Activated CD4-positive, alpha-beta T cell treated with anti-CD3 and anti-CD28 coated beads, Interleukin-2, amount 10 ng/mL, durations not matched to agents 24 days and 14 days (primary cell): ENCODE measurements at regions of chr3 and their contacts with region 1.

Region 1: GRCh38 chr3:128794770-128795649 is 69.0 kb downstream of the RAB7A start:
- DNase-seq: peak; percentile 91
- H3K4me3 Mint-ChIP-seq: peak overlapping the region; percentile 68
- H3K27ac Mint-ChIP-seq: peak overlapping the region; percentile 94
- H3K4me1 Mint-ChIP-seq: peaks cover 72% of the 10 kb centered on the region
- H3K27me3 Mint-ChIP-seq: no peaks in the 10 kb centered on the region

Region 2: DNA sequence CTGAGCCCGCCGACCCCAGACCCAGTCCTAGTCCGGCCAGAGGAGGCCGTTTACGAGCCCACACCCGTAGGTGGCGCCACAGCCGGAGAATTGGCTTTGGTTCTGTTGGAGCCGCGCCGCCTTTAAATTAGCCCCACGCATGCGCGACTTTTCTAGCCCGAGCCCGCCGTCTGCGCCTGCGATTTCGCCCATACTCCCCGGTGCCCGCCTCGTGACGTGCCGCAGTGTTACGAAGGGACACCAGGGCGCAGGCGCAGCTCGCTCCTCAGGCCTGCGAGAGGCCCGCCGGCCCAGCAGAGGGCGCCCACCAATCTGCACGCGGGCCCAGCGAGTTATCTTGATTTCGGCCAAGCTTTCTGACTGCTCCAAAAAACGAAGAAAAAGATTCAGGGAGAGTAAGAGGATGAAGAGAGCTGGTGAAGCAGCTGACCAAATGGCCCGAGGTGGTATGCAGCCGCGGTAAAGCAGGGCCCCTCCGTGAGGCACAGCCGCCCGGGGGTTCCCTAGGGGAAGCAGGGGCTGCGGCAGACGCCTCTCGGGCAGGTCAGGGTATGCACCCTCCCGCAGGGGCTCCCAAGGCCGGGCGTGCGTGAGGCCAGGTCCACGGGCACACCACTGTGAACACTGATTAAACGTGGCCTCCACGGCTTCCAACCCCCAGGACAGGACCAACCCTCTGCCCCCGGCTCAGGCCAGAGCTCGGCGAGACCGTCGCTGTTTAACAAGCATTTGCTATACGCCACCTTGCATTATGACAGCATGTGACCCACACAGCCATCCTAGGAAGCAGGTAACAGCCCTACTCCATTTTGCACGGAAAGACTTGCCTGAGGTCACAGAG is 177.2 kb before region 1 on chr3:
- intact Hi-C with region 1: loop called (anchors 2 kb)
- DNase-seq: peak; percentile 100
- H3K4me3 Mint-ChIP-seq: peak overlapping the region; percentile 95
- H3K27ac Mint-ChIP-seq: peak overlapping the region; percentile 96
- H3K4me1 Mint-ChIP-seq: peaks cover 34% of the 10 kb centered on the region
- H3K27me3 Mint-ChIP-seq: no peaks in the 10 kb centered on the region

Region 3: DNA sequence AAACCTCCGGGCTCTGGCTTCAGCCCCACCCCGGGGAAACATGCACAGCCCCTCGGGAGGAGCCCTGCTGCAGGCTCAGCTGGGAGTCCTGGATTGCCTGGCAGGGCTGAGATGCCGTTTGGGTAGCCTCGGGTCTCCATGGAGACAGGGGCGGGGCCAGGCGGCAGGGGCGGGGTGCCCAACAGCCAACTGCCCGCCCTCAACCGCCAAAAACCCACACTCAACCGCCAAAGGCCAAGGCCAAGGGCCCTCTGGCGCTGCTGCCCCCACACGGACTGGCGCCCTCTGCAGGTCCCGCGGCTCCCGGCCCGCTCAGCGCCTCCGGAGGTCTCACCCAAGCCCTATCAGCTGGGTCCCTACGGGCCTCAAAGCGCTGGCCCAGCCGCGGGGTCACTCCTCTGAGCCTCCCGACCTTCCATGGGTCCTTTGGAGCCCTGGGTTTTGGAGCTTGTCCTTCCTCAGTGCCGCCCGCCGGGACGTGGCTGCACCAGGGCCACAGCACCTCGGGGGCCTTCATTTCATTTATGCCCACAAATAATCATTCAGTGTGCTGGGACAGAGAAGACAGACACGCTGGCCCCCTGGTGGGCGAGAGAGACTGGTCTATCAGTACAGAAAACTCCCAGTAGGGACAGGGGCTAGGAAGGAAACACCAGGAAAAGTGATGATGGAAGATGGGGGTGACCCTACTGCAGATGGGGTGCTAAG is 50.9 kb after region 1 on chr3:
- intact Hi-C with region 1: loop called (anchors 2 kb)
- DNase-seq: peak; percentile 94
- H3K4me3 Mint-ChIP-seq: peak overlapping the region; percentile 69
- H3K27ac Mint-ChIP-seq: peak overlapping the region; percentile 88
- H3K4me1 Mint-ChIP-seq: peaks cover 18% of the 10 kb centered on the region
- H3K27me3 Mint-ChIP-seq: no peaks in the 10 kb centered on the region

Region 4: GRCh38 chr3:129230311-129231019 is 435.5 kb after region 1 on chr3:
- intact Hi-C with region 1: loop called (anchors 1 kb)
- DNase-seq: peak; percentile 81
- H3K4me3 Mint-ChIP-seq: peak overlapping the region; percentile 59
- H3K27ac Mint-ChIP-seq: peak overlapping the region; percentile 88
- H3K4me1 Mint-ChIP-seq: peaks cover 67% of the 10 kb centered on the region
- H3K27me3 Mint-ChIP-seq: no peaks in the 10 kb centered on the region